Naive thymus-derived CD4-positive, alpha-beta T cell (primary cell): ENCODE measurements at regions of chr1 and their contacts with region 1.

Region 1: GRCh38 chr1:234842726-234843641 is 233.0 kb upstream of the IRF2BP2 start:
- DNase-seq: peak in 8 of 9 donors; percentile 7 to 81 (median 30)
- ATAC-seq: peak; percentile 26
- H3K4me3 ChIP-seq: peak overlapping the region; percentile 5
- H3K4me3 Mint-ChIP-seq: peak overlapping the region; percentile 30 to 77 (median 62)
- H3K27ac ChIP-seq: peak overlapping the region; percentile 15
- H3K27ac Mint-ChIP-seq: peak overlapping the region; percentile 30 to 90 (median 77)
- H3K4me1 ChIP-seq: peaks cover 36 to 57% of the 10 kb centered on the region in 2 donors
- H3K4me1 Mint-ChIP-seq: peaks cover 44 to 89% (median 74%) of the 10 kb centered on the region in 7 donors
- H3K27me3 ChIP-seq: no peaks in the 10 kb centered on the region
- H3K27me3 Mint-ChIP-seq: no peaks in the 10 kb centered on the region

Region 2: GRCh38 chr1:234315091-234315541 is 527.9 kb before region 1 on chr1:
- CTCF ChIA-PET with region 1: no interaction called
- POLR2A ChIA-PET with region 1: no interaction called
- intact Hi-C with region 1: no loop called
- DNase-seq: peak in 4 of 9 donors; percentile 58 to 74 (median 66)
- ATAC-seq: no peak
- H3K4me3 ChIP-seq: no peak overlapping the region
- H3K4me3 Mint-ChIP-seq: peak overlapping the region in 5 of 10 donors; percentile 42 to 74 (median 67)
- H3K27ac ChIP-seq: peak overlapping the region; percentile 47
- H3K27ac Mint-ChIP-seq: peak overlapping the region in 5 of 9 donors; percentile 91 to 99 (median 96)
- H3K4me1 ChIP-seq: peaks cover 25 to 38% of the 10 kb centered on the region in 2 donors
- H3K4me1 Mint-ChIP-seq: peaks cover 0 to 70% (median 41%) of the 10 kb centered on the region in 7 donors
- H3K27me3 ChIP-seq: no peaks in the 10 kb centered on the region
- H3K27me3 Mint-ChIP-seq: peaks cover 0 to 29% (median 8%) of the 10 kb centered on the region in 5 donors

Region 3: GRCh38 chr1:234656856-234657654 is 185.9 kb before region 1 on chr1:
- CTCF ChIA-PET with region 1: no interaction called
- POLR2A ChIA-PET with region 1: no interaction called
- intact Hi-C with region 1: no loop called
- DNase-seq: no peak
- ATAC-seq: peak; percentile 95
- H3K4me3 ChIP-seq: no peak overlapping the region
- H3K4me3 Mint-ChIP-seq: peak overlapping the region in 1 of 10 donors; percentile 43
- H3K27ac ChIP-seq: no peak overlapping the region
- H3K27ac Mint-ChIP-seq: peak overlapping the region in 3 of 9 donors; percentile 20 to 54 (median 42)
- H3K4me1 ChIP-seq: no peaks in the 10 kb centered on the region
- H3K4me1 Mint-ChIP-seq: peaks cover 0 to 15% (median 12%) of the 10 kb centered on the region in 7 donors
- H3K27me3 ChIP-seq: no peaks in the 10 kb centered on the region
- H3K27me3 Mint-ChIP-seq: peaks cover 0 to 6% (median 0%) of the 10 kb centered on the region in 5 donors

Region 4: DNA sequence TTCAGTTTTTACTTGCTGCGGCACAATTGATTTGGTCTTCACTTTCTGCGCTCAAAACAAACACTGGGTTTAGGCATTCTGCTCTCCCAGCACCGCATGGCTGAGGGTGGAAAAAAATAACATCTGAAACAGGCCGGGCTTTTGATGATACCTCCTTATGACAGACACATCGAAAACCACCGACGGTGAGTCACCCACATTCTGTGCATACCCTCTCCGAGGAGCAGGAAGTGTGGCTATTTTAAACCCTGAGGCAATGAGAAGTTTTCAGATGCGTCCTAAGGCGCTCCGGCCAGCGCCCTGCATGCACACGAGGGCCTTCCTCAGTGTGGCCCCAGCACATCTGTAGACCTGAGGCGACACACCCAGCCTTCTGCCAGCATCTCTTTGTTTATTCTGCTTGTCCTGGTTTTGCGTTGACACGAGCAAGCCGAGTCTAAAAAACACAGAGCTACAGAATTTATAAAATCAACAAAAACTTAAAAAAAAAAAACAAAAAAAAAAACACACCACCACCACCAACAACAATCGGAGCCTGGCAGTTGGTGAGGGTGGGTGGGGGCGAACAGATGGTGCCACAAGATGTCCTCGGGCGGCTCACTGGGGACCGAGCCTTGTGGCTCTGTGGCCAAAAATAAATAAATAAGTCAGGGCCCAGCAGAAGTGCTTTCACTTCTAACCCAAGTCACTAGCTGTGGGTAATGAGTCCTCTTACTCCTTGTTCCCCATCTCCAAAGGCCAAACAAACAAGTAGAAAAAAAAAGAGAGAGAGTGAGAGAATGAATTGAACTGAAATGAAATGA is 70.4 kb before region 1 on chr1:
- CTCF ChIA-PET with region 1: no interaction called
- POLR2A ChIA-PET with region 1: no interaction called
- intact Hi-C with region 1: loop called (anchors 1 to 5 kb)
- DNase-seq: peak; percentile 42 to 88 (median 64)
- ATAC-seq: peak; percentile 88
- H3K4me3 ChIP-seq: peak overlapping the region; percentile 7
- H3K4me3 Mint-ChIP-seq: peak overlapping the region; percentile 55 to 83 (median 74)
- H3K27ac ChIP-seq: peak overlapping the region; percentile 64
- H3K27ac Mint-ChIP-seq: peak overlapping the region; percentile 79 to 95 (median 90)
- H3K4me1 ChIP-seq: peaks cover 14 to 53% of the 10 kb centered on the region in 2 donors
- H3K4me1 Mint-ChIP-seq: peaks cover 39 to 69% (median 54%) of the 10 kb centered on the region in 7 donors
- H3K27me3 ChIP-seq: no peaks in the 10 kb centered on the region
- H3K27me3 Mint-ChIP-seq: no peaks in the 10 kb centered on the region

Region 5: GRCh38 chr1:234925440-234926263 is 82.7 kb after region 1 on chr1:
- CTCF ChIA-PET with region 1: interaction called, 3 read pairs
- POLR2A ChIA-PET with region 1: interaction called, 3 read pairs
- intact Hi-C with region 1: loop called in 1 of 2 experiments (anchors 1 kb)
- DNase-seq: peak in 3 of 9 donors; percentile 25 to 35 (median 30)
- ATAC-seq: peak; percentile 50
- H3K4me3 ChIP-seq: no peak overlapping the region
- H3K4me3 Mint-ChIP-seq: peak overlapping the region; percentile 45 to 80 (median 66)
- H3K27ac ChIP-seq: no peak overlapping the region
- H3K27ac Mint-ChIP-seq: peak overlapping the region; percentile 80 to 93 (median 83)
- H3K4me1 ChIP-seq: peaks cover 26 to 47% of the 10 kb centered on the region in 2 donors
- H3K4me1 Mint-ChIP-seq: peaks cover 37 to 60% (median 55%) of the 10 kb centered on the region in 7 donors
- H3K27me3 ChIP-seq: no peaks in the 10 kb centered on the region
- H3K27me3 Mint-ChIP-seq: no peaks in the 10 kb centered on the region

Region 6: GRCh38 chr1:235004840-235005391 is 161.9 kb after region 1 on chr1:
- CTCF ChIA-PET with region 1: no interaction called
- POLR2A ChIA-PET with region 1: no interaction called
- intact Hi-C with region 1: loop called in 1 of 2 experiments (anchors 1 kb)
- DNase-seq: no peak
- ATAC-seq: no peak
- H3K4me3 ChIP-seq: no peak overlapping the region
- H3K4me3 Mint-ChIP-seq: no peak overlapping the region
- H3K27ac ChIP-seq: no peak overlapping the region
- H3K27ac Mint-ChIP-seq: no peak overlapping the region
- H3K4me1 ChIP-seq: no peaks in the 10 kb centered on the region
- H3K4me1 Mint-ChIP-seq: peaks cover 13 to 52% (median 27%) of the 10 kb centered on the region in 7 donors
- H3K27me3 ChIP-seq: no peaks in the 10 kb centered on the region
- H3K27me3 Mint-ChIP-seq: no peaks in the 10 kb centered on the region